ENCODE measurements at regions of chr19 and their contacts with region 1.

Region 1: DNA sequence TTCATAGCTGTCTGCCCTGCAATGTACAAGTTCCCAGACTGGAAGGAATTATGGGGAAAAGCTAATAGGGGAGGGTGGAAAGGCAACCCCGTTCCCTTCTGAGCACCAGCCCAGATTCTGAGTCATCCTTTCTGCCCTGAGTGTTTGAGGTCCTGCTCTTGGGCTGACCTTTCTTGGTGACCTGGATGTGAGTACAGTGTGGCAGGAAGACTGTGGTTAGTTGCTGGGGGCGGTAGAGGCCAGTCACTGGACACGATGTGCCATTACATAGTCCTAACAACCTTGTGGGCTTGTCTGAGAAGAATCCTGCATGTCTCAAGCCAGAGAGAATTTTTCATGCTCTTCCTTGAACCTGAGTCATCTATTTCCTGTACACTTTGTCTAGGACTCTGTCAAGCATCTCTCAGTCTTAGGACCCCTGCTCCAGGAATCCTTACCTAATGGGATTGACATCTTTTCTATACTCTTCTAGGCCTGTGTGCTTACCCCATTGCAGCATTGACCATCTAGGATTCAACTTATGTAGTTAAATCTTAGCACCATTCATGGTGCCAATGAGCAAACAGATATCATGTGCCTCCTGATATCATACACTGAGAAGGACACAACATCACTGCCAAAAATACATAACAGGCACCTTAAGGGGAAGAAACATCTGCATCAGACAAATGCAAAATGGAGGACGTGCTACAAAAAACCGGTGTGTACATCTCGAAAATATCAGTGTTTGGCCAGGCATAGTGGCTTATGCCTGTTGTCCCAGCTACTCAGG is 8.1 kb upstream of the ANGPTL4 start:
- DNase-seq: peak; percentile 89

Region 2: GRCh38 chr19:8307965-8308866 is 47.6 kb before region 1 on chr19 and contains the start of gene CD320:
- intact Hi-C with region 1: no loop called
- DNase-seq: peak; percentile 97
- total RNA-seq, gene CD320: 29.2 to 31.6 TPM

Region 3: GRCh38 chr19:8396563-8397203 is 40.9 kb after region 1 on chr19:
- intact Hi-C with region 1: loop called (anchors 2 to 5 kb)
- DNase-seq: peak; percentile 88

Region 4: GRCh38 chr19:8505680-8506401 is 150.0 kb after region 1 on chr19:
- intact Hi-C with region 1: loop called in 1 of 2 experiments (anchors 5 kb)
- DNase-seq: peak; percentile 93